Activated CD4-positive, alpha-beta T cell treated with anti-CD3 and anti-CD28 coated beads for 36 hours (primary cell): ENCODE measurements at regions of chr22 and their contacts with region 1.

Region 1: GRCh38 chr22:40714192-40714951 is 35.1 kb downstream of the MCHR1 start:
- DNase-seq: no peak
- ATAC-seq: no peak
- H3K4me3 Mint-ChIP-seq: no peak overlapping the region
- H3K27ac Mint-ChIP-seq: no peak overlapping the region
- H3K4me1 Mint-ChIP-seq: peaks cover 20% of the 10 kb centered on the region
- H3K27me3 Mint-ChIP-seq: peaks cover 3% of the 10 kb centered on the region

Region 2: DNA sequence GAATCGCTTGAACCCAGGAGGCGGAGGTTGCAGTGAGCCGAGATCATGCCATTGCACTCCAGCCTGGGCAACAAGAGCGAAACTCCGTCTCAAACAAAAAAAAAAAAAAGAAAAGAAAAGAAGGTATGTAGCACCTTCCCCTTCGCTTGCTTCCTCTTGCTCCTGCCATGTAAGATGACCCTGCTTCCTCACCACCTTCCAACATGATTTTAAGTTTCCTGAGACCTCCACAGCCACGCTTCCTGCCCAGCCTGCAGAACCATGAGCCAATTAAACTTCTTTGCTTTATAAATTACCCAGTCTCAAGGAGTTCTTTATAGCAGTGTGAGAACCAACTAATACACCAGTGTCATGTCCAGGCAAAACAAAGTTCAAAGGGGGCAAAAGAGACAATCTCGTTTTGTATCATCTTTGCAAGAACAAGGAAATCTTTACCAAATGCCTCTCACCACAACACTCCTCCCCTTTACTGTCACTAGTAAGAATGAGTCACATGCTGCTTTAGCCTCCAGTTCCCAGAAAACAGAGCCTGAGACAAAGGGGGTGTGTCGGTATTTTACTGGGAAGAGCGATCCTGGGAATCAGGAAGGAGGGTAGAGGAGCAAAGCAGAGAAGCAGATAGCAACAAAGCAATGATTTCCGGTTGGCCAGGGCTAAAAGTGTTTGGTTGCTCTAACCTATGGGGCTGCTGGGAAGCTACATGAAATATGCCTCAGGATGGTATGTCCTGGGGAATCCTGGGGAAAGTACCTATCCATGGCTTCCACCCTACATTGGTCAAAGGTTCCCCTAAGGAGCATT is 45.6 kb before region 1 on chr22:
- CTCF ChIA-PET with region 1: no interaction called
- POLR2A ChIA-PET with region 1: no interaction called
- intact Hi-C with region 1: loop called in 1 of 2 experiments (anchors 1 kb)
- DNase-seq: peak; percentile 30
- ATAC-seq: peak; percentile 91
- H3K4me3 Mint-ChIP-seq: no peak overlapping the region
- H3K27ac Mint-ChIP-seq: peak overlapping the region; percentile 92
- H3K4me1 Mint-ChIP-seq: peaks cover 21% of the 10 kb centered on the region
- H3K27me3 Mint-ChIP-seq: no peaks in the 10 kb centered on the region

Region 3: GRCh38 chr22:40728731-40729189 is 14.4 kb after region 1 on chr22:
- CTCF ChIA-PET with region 1: interaction called, 6 read pairs
- POLR2A ChIA-PET with region 1: interaction called, 5 read pairs
- intact Hi-C with region 1: loop called (anchors 1 to 2 kb)
- DNase-seq: peak; percentile 75
- ATAC-seq: peak; percentile 23
- H3K4me3 Mint-ChIP-seq: peak overlapping the region; percentile 64
- H3K27ac Mint-ChIP-seq: peak overlapping the region; percentile 94
- H3K4me1 Mint-ChIP-seq: peaks cover 50% of the 10 kb centered on the region
- H3K27me3 Mint-ChIP-seq: no peaks in the 10 kb centered on the region

Region 4: GRCh38 chr22:40922484-40923303 is 208.3 kb after region 1 on chr22:
- CTCF ChIA-PET with region 1: no interaction called
- POLR2A ChIA-PET with region 1: no interaction called
- intact Hi-C with region 1: no loop called
- DNase-seq: no peak
- ATAC-seq: peak; percentile 86
- H3K4me3 Mint-ChIP-seq: peak overlapping the region; percentile 29
- H3K27ac Mint-ChIP-seq: no peak overlapping the region
- H3K4me1 Mint-ChIP-seq: peaks cover 4% of the 10 kb centered on the region
- H3K27me3 Mint-ChIP-seq: no peaks in the 10 kb centered on the region